OCI-LY7 (cell line): ENCODE measurements at regions of chr2 and their contacts with region 1.

Region 1: DNA sequence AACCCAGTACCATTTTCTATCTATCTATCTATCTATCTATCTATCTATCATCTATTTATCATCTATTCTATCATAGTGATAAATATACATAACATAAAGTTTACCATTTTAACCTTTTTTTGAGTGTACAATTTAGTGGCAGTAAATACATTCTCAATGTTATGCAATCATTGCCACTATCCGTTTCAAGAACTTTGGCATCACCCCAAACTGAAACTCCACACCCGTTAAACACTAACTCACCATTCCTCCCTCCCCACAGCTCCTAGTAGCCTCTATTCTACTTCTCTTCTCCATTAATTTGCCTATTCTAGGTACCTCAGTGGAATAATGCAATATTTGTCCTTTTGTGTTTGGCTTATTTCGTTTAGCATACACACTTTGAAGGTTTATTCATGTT is 82.5 kb upstream of the KCNE4 start:
- DNase-seq: no peak
- H3K4me3 ChIP-seq: no peak overlapping the region
- H3K27ac ChIP-seq: no peak overlapping the region
- H3K4me1 ChIP-seq: no peaks in the 10 kb centered on the region
- CTCF ChIP-seq: no peak

Region 2: GRCh38 chr2:222982010-222982908 is 12.8 kb after region 1 on chr2:
- CTCF ChIA-PET with region 1: interaction called, 10 read pairs
- POLR2A ChIA-PET with region 1: interaction called, 10 read pairs
- intact Hi-C with region 1: no loop called
- DNase-seq: peak; percentile 61
- H3K4me3 ChIP-seq: no peak overlapping the region
- H3K27ac ChIP-seq: no peak overlapping the region
- H3K4me1 ChIP-seq: peaks cover 9% of the 10 kb centered on the region
- CTCF ChIP-seq: peak; percentile 58

Region 3: DNA sequence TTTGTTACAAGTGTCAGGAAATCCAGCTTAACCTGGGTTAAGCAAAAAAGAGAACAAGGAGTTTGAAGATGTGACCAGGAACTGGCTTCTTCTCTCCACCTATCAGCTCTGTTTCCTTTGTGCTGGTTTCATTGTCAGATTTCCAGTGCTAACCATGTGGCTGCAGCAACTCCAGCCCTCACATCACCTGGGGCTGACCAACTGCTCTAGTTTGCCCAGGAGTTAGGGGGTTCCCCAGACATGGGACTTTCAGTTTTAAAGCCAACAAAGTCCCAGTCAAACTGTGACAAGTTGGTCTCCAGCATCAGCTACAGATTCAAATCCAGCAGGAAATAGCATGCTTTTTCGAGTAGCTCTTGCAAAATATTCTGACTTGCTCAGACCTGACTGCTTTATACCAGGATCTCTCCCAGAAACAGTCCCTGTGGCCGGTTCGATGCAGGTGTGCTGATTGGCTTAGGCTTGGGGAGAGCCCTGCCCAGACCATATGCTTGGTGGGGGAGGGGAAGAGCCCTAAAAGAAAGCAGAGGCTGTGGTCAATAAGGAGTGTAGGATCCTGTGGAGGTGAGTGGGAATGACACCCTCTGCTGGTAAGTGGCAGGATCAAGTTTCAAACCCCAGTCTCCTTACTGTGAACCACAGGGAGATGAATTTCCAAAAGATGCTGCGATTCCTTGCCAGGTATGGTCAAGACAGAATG is 132.0 kb after region 1 on chr2:
- CTCF ChIA-PET with region 1: no interaction called
- POLR2A ChIA-PET with region 1: no interaction called
- intact Hi-C with region 1: loop called (anchors 2 kb)
- DNase-seq: peak; percentile 16
- H3K4me3 ChIP-seq: no peak overlapping the region
- H3K27ac ChIP-seq: no peak overlapping the region
- H3K4me1 ChIP-seq: no peaks in the 10 kb centered on the region
- CTCF ChIP-seq: peak; percentile 63; the same call in 1 of the 2 replicates